ENCODE measurements at regions of chr13 and their contacts with region 1.

Region 1: GRCh38 chr13:86870444-86870843 is 800.7 kb upstream of the SLITRK5 start:
- DNase-seq: no peak
- H3K4me3 Mint-ChIP-seq: no peak overlapping the region
- H3K27ac Mint-ChIP-seq: no peak overlapping the region
- H3K4me1 Mint-ChIP-seq: no peaks in the 10 kb centered on the region
- H3K27me3 Mint-ChIP-seq: no peaks in the 10 kb centered on the region

Region 2: GRCh38 chr13:86932776-86933334 is 62.4 kb after region 1 on chr13:
- CTCF ChIA-PET with region 1: no interaction called
- POLR2A ChIA-PET with region 1: no interaction called
- intact Hi-C with region 1: no loop called
- DNase-seq: no peak
- H3K4me3 Mint-ChIP-seq: no peak overlapping the region
- H3K27ac Mint-ChIP-seq: no peak overlapping the region
- H3K4me1 Mint-ChIP-seq: no peaks in the 10 kb centered on the region
- H3K27me3 Mint-ChIP-seq: no peaks in the 10 kb centered on the region

Region 3: DNA sequence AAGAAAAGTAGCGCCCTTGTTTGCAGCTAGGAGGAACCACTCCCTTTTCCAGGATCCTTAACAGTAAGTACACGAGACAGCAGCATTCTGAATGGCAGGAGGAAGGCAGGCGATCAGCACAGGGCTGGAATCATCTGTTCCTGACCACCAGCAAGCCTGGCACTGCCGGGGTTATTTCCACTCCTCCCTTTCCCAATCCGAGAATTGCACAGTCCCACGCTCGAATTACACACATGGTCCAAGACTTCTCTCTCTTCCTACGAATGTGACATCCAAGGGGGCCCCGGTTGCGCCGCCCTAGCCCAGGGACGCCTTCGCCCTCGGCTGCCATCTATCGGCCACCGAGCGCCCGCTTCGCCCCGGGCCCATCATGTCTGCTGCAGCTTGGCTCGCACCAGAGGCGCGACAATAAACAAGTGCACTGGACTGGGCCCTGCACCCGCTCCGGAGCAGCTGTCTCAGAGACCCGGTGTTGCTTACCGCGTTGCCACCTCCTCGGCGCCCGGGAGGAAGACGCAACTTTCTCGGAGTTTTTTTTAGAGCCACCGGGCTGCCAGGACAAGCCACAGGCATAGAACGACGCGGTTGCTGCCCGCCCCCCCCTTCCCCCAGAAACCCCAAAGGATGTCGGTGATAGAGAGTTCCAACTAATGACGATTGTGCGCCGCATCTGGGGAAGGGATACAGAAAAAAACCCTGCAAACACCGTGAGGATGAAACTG is 800.7 kb after region 1 on chr13 and contains the start of gene SLITRK5:
- CTCF ChIA-PET with region 1: no interaction called
- POLR2A ChIA-PET with region 1: no interaction called
- intact Hi-C with region 1: loop called (anchors 2 kb)
- DNase-seq: peak; percentile 68
- H3K4me3 Mint-ChIP-seq: peak within 1 kb of the TSS; percentile 66
- H3K27ac Mint-ChIP-seq: no peak within 1 kb of the TSS
- H3K4me1 Mint-ChIP-seq: peaks cover 26% of the 10 kb centered on the region
- H3K27me3 Mint-ChIP-seq: peaks cover 36% of the 10 kb centered on the region
- total RNA-seq, gene SLITRK5: under 0.01 TPM